ENCODE measurements at regions of chr15 and their contacts with region 1.

Region 1: DNA sequence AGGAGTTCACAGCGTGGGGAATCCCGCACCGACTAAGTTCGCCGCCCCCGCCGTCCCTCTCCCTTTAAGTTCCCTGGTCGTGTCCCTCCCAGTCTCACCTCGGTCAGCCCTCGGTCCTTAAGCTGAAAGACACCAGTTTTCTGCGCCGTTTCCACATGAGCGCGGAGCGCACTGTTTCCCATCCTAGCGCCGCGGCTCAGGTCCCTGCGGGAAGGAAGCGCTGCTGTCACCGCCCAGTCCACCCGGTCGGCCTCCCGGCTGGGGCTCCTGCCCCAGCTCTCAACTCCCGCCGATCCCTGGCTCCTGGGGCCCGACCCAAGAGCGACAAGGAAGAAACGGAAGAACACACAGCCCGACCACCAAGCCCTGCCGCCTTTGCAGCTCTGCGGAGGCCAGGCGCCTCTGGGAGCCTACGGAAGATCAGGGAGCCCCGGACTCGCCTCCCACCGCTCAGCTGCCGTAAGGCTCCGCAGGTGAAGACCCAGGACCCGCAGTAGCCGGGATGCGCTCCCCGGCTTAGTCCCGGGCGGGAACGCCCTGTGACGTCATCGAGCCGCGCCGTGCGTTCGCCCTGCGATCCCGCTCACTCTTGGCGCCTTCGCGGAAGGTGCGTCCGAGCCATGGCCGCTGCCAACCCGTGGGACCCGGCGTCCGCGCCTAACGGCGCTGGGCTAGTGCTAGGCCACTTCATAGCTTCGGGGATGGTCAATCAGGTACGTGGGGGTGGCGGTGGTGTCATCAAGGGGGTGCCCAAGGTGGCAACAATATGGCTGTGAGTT is at the starts of genes HAUS2 and LRRC57:
- DNase-seq: peak; percentile 90
- H3K4me3 ChIP-seq: peak within 1 kb of the TSS; percentile 98
- H3K27ac ChIP-seq: peak within 1 kb of the TSS; percentile 71
- H3K4me1 ChIP-seq: peaks cover 45% of the 10 kb centered on the region
- CTCF ChIP-seq: no peak
- total RNA-seq, gene HAUS2: 44.9 and 50.4 TPM in 2 replicates
- total RNA-seq, gene LRRC57: 17.9 and 18.5 TPM in 2 replicates

Region 2: GRCh38 chr15:42490671-42491544 is 57.5 kb before region 1 on chr15 and contains the start of gene ZNF106:
- CTCF ChIA-PET with region 1: interaction called, 3 read pairs
- POLR2A ChIA-PET with region 1: interaction called, 3 read pairs
- intact Hi-C with region 1: loop called (anchors 2 kb)
- DNase-seq: peak; percentile 94
- H3K4me3 ChIP-seq: peak within 1 kb of the TSS; percentile 87
- H3K27ac ChIP-seq: peak within 1 kb of the TSS; percentile 78
- H3K4me1 ChIP-seq: peaks cover 42% of the 10 kb centered on the region
- CTCF ChIP-seq: peak; percentile 52; the same call in 1 of the 2 replicates
- total RNA-seq, gene ZNF106: 30.5 and 30.8 TPM in 2 replicates

Region 3: DNA sequence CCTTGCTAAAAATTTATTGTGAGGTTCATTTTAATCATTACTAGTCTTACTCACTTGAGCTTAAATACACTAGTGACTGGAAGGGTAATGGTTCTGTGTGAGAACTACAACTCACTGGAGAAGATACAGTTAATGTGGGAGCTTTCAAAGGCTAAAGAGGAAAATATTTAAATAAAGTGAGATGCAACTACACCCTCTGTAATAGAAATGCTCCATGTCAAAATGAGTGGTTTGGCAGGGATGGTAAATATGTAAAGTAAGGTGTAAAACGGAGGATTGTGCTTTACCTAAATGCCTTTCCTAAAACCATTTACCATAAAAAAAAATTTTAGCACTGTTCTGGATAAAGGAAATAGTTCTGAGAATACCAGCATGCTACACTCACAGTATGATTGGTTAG is 15.2 kb before region 1 on chr15:
- CTCF ChIA-PET with region 1: no interaction called
- POLR2A ChIA-PET with region 1: interaction called, 15 read pairs
- intact Hi-C with region 1: no loop called
- DNase-seq: no peak
- H3K4me3 ChIP-seq: no peak overlapping the region
- H3K27ac ChIP-seq: no peak overlapping the region
- H3K4me1 ChIP-seq: no peaks in the 10 kb centered on the region
- CTCF ChIP-seq: no peak

Region 4: DNA sequence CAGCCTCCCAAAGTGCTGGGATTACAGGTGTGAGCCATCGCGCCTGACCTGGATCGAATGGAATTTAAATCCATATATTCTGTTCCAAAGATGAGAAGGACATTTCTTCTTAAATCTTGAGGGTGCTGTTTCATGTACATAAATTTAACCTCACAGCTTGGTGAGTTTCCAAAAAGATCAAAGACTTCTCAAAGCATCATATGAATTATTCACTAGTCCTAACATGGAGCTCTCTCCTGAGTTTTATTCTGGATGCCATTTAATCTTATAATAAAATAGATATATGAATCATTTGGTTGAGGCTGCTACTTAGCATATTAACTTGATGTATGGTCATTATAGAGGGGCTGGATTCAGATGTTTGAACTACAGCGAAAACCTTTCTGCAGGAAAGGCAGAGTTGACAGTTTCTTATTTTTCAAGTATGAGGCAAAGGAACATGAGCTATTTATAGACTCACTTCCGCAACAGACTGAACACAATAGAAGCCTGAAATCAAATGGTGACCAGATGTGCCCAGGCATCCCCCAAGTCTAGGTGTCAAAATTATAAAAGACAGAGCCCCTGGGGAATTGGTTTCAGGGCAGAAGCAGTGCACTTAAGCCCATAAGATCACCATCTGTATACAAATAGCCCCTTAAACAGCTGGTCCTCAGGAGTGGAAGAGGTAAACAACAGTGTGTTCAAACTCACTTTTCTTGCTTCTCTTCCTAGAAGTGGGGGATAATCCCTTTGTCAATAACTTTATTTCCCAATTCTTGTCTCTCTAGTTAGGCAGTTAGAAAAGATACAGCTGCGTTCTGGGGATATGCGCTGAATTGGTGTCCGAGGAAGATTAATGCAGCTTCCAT is 56.7 kb after region 1 on chr15:
- CTCF ChIA-PET with region 1: no interaction called
- POLR2A ChIA-PET with region 1: no interaction called
- intact Hi-C with region 1: no loop called
- DNase-seq: peak; percentile 94
- H3K4me3 ChIP-seq: peak overlapping the region; percentile 16
- H3K27ac ChIP-seq: peak overlapping the region; percentile 83
- H3K4me1 ChIP-seq: peaks cover 70% of the 10 kb centered on the region
- CTCF ChIP-seq: no peak